MCF 10A (cell line): ENCODE measurements at regions of chr12 and their contacts with region 1.

Region 1: GRCh38 chr12:120228291-120229070 is 27.6 kb upstream of the RPLP0 start:
- DNase-seq: peak; percentile 84
- H3K4me3 Mint-ChIP-seq: peak overlapping the region; percentile 50
- H3K27ac Mint-ChIP-seq: no peak overlapping the region
- H3K4me1 Mint-ChIP-seq: peaks cover 62% of the 10 kb centered on the region
- H3K27me3 Mint-ChIP-seq: no peaks in the 10 kb centered on the region
- CTCF ChIP-seq: peak; percentile 90

Region 2: DNA sequence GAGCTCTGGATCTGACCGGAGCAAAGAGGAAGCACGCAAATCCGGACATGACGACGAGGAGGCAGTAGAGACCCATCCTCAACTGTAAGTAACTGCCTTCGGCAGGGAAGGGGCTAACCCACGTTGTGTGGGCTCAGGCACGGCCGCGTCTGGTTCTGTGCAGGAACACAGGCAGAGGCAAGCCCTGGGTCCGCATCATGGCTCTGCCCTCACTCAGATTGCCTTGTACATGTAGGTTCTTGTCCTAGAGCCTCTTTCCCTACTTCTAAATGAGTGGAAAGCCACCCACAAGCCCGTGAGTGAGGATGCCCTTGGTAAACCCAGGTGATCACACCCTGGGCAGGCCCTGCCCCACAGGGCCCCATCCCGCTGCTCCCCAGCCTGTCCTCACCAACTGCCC is 18.6 kb before region 1 on chr12:
- CTCF ChIA-PET with region 1: interaction called, 86 read pairs
- POLR2A ChIA-PET with region 1: interaction called, 9 read pairs
- intact Hi-C with region 1: no loop called
- DNase-seq: no peak
- H3K4me3 Mint-ChIP-seq: no peak overlapping the region
- H3K27ac Mint-ChIP-seq: no peak overlapping the region
- H3K4me1 Mint-ChIP-seq: no peaks in the 10 kb centered on the region
- H3K27me3 Mint-ChIP-seq: no peaks in the 10 kb centered on the region
- CTCF ChIP-seq: no peak

Region 3: DNA sequence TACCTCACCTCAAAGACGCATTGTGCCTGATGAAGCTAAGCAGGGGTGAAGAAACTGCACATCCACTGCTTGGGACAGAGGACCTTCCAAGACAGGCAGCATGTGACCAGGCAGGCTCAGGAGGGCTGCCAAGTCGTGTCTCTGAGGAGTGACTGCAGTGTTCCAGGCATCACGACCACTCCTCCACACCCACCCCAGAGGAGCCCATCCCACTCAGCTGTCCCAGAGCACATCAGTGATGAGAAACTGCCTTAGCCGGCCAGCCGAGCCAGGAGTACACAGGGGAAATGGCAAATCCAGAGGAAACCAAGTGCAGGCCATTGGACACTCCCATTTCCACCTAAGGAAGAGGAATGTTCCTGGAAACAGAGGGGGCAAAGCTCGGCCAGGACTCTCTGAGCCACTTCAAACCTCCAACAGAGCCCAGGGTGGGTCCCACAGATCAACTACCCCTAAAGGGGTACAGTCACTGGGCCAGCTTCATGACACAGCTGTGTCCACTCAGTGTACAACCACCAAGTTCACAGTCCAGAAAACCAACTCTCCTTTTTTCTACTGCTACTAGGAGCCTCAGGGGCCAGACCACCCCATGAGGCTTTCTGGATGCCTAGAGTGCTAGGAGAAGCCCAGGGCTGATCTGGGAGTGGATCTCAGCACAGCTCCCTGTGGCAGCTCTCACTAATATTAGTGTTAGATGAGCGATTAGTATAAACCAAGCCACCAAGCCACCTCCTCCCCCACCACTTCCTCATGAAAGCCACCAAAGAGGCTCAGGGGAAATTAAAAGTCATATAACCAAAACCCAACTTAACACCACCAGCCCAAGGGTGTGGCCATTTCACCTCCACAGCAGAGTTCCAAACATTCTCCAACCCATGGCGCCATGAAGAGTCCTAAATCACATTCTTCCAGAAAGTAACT is 21.7 kb after region 1 on chr12:
- CTCF ChIA-PET with region 1: interaction called, 336 read pairs
- POLR2A ChIA-PET with region 1: interaction called, 549 read pairs
- intact Hi-C with region 1: no loop called
- DNase-seq: no peak
- H3K4me3 Mint-ChIP-seq: no peak overlapping the region
- H3K27ac Mint-ChIP-seq: peak overlapping the region; percentile 81
- H3K4me1 Mint-ChIP-seq: peaks cover 62% of the 10 kb centered on the region
- H3K27me3 Mint-ChIP-seq: no peaks in the 10 kb centered on the region
- CTCF ChIP-seq: no peak

Region 4: DNA sequence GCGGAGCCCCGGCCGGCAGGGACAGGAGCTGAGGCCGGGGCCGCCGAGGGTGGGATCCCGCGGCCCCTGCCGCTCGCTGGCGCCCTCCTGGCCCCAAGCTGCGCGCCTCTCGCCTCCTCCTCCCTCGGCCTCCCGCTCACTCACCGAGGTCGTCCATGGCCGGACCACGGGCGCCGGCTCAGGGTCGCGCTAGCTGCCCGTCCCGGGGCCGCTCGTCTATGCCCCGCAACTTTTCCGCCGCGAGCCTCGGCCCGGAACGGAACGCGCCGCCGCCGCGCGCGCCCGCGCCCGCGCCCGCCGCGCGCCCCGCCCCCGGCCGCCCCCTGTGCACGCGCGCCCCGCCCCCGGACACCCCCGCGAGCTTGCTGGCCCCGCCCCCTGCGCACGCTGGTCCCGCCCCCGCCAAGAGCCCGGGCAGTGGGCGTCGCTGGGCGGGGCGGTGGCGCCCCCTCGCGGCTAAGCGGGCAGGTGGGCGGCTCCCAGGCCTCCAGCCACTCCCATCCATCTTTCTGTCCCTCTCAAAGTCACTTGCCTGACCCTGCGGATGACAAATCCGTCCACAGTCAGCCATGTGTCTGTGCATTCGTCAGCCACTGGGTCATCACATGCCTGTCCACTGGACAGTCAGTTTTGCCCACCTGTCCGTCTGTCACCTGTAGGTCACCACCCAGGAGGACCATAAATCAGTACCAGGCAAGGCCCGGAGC is 37.1 kb after region 1 on chr12 and contains the start of gene PXN:
- CTCF ChIA-PET with region 1: interaction called, 454 read pairs
- POLR2A ChIA-PET with region 1: interaction called, 549 read pairs
- intact Hi-C with region 1: loop called (anchors 1 kb)
- DNase-seq: peak; percentile 72
- H3K4me3 Mint-ChIP-seq: peak within 1 kb of the TSS; percentile 95
- H3K27ac Mint-ChIP-seq: peak within 1 kb of the TSS; percentile 94
- H3K4me1 Mint-ChIP-seq: peaks cover 28% of the 10 kb centered on the region
- H3K27me3 Mint-ChIP-seq: no peaks in the 10 kb centered on the region
- CTCF ChIP-seq: peak; percentile 84
- total RNA-seq, gene PXN: 216 and 256 TPM in 2 replicates